CD8-positive, alpha-beta T cell (primary cell): ENCODE measurements at regions of chr6 and their contacts with region 1.

Region 1: GRCh38 chr6:158213925-158214674 is 46.0 kb downstream of the GTF2H5 start:
- DNase-seq: peak; percentile 9 to 77 (median 46)
- ATAC-seq: peak; percentile 99
- H3K4me3 ChIP-seq: no peak overlapping the region
- H3K4me3 Mint-ChIP-seq: no peak overlapping the region
- H3K27ac ChIP-seq: no peak overlapping the region
- H3K27ac Mint-ChIP-seq: no peak overlapping the region
- H3K4me1 ChIP-seq: no peaks in the 10 kb centered on the region
- H3K4me1 Mint-ChIP-seq: no peaks in the 10 kb centered on the region
- H3K27me3 ChIP-seq: no peaks in the 10 kb centered on the region
- H3K27me3 Mint-ChIP-seq: no peaks in the 10 kb centered on the region
- CTCF ChIP-seq: peak; percentile 84

Region 2: DNA sequence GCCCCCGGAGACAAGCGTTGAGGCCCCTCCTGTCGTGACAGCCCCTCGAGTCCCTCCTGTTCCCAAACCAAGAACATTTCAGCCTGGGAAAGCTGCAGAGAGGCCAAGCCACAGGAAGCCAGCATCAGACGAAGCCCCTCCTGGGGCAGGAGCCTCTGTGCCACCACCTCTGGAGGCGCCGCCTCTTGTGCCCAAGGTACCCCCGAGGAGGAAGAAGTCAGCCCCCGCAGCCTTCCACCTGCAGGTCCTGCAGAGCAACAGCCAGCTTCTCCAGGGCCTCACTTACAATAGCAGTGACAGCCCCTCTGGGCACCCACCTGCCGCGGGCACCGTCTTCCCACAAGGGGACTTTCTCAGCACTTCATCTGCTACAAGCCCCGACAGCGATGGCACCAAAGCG is 118.4 kb before region 1 on chr6:
- CTCF ChIA-PET with region 1: no interaction called
- POLR2A ChIA-PET with region 1: no interaction called
- intact Hi-C with region 1: no loop called
- DNase-seq: no peak
- ATAC-seq: no peak
- H3K4me3 ChIP-seq: no peak overlapping the region
- H3K4me3 Mint-ChIP-seq: no peak overlapping the region
- H3K27ac ChIP-seq: no peak overlapping the region
- H3K27ac Mint-ChIP-seq: no peak overlapping the region
- H3K4me1 ChIP-seq: no peaks in the 10 kb centered on the region
- H3K4me1 Mint-ChIP-seq: no peaks in the 10 kb centered on the region
- H3K27me3 ChIP-seq: no peaks in the 10 kb centered on the region
- H3K27me3 Mint-ChIP-seq: no peaks in the 10 kb centered on the region
- CTCF ChIP-seq: no peak

Region 3: DNA sequence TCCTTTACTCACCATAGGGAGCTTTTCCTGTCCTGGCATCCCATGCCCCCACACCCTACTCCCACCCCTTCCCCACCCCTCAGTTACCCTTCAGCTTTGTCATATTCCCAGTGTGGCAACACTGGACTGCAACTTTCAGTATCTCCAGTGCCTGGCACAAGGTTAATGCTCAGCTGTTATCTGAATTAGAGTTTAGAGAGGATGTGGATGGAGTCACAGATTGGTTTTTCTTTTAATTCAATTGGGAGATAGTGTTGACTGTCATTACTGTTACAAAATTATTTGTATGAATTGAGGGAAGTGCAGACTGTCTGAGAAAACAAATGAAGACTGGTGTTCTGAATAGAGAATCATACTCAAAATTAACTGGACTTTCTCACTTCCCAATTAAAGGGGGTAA is 188.1 kb after region 1 on chr6:
- CTCF ChIA-PET with region 1: interaction called, 10 read pairs
- POLR2A ChIA-PET with region 1: interaction called, 3 read pairs
- intact Hi-C with region 1: no loop called
- DNase-seq: no peak
- ATAC-seq: no peak
- H3K4me3 ChIP-seq: no peak overlapping the region
- H3K4me3 Mint-ChIP-seq: no peak overlapping the region
- H3K27ac ChIP-seq: no peak overlapping the region
- H3K27ac Mint-ChIP-seq: no peak overlapping the region
- H3K4me1 ChIP-seq: no peaks in the 10 kb centered on the region
- H3K4me1 Mint-ChIP-seq: peaks cover 16% of the 10 kb centered on the region
- H3K27me3 ChIP-seq: no peaks in the 10 kb centered on the region
- H3K27me3 Mint-ChIP-seq: no peaks in the 10 kb centered on the region
- CTCF ChIP-seq: no peak

Region 4: GRCh38 chr6:158518191-158519127 is 304.4 kb after region 1 on chr6:
- CTCF ChIA-PET with region 1: interaction called, 7 read pairs
- POLR2A ChIA-PET with region 1: no interaction called
- intact Hi-C with region 1: loop called in 1 of 2 experiments (anchors 2 kb)
- DNase-seq: peak in 6 of 9 experiments; percentile 25 to 74 (median 52)
- ATAC-seq: peak; percentile 66
- H3K4me3 ChIP-seq: peak overlapping the region; percentile 10 to 41
- H3K4me3 Mint-ChIP-seq: peak overlapping the region; percentile 72
- H3K27ac ChIP-seq: peak overlapping the region in 1 of 2 experiments; percentile 41
- H3K27ac Mint-ChIP-seq: peak overlapping the region; percentile 8
- H3K4me1 ChIP-seq: peaks cover 20% of the 10 kb centered on the region
- H3K4me1 Mint-ChIP-seq: peaks cover 41% of the 10 kb centered on the region
- H3K27me3 ChIP-seq: peaks cover 0 to 4% of the 10 kb centered on the region in 2 experiments
- H3K27me3 Mint-ChIP-seq: peaks cover 24% of the 10 kb centered on the region
- CTCF ChIP-seq: no peak

Region 5: DNA sequence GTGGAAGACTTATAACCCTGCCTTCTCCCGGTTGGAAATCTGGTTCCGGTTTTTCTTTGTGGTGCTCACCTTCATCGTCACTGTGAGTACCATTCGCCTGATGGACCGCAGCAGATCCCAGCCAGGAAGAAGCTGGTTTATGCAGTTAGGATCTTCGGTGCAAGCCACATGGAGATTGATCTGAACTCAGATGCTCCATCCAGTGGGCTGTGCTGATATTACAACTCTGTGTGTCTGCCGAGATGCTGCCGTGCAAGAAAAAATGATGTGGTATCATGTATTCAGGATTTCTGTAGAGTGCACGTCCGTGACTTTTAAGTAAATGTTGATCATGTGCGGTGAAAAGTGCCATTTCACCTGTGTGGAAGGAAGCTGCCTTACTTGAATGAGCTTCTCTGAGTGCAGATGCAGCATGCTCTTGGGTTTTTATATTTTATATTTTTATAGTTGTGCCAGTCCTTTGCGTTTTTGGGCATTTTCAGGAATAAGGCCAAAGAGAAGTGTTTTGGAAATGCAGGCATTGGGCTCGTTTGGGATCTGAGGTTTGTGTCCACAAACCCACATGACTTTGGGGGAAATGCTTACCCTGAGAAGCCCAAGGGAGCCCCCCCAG is 391.3 kb after region 1 on chr6:
- CTCF ChIA-PET with region 1: interaction called, 21 read pairs
- POLR2A ChIA-PET with region 1: no interaction called
- intact Hi-C with region 1: loop called (anchors 1 to 2 kb)
- DNase-seq: peak; percentile 14 to 71 (median 52)
- ATAC-seq: peak; percentile 87
- H3K4me3 ChIP-seq: no peak overlapping the region
- H3K4me3 Mint-ChIP-seq: no peak overlapping the region
- H3K27ac ChIP-seq: peak overlapping the region in 1 of 2 experiments; percentile 1
- H3K27ac Mint-ChIP-seq: no peak overlapping the region
- H3K4me1 ChIP-seq: no peaks in the 10 kb centered on the region
- H3K4me1 Mint-ChIP-seq: peaks cover 2% of the 10 kb centered on the region
- H3K27me3 ChIP-seq: no peaks in the 10 kb centered on the region
- H3K27me3 Mint-ChIP-seq: no peaks in the 10 kb centered on the region
- CTCF ChIP-seq: peak; percentile 69

Region 6: GRCh38 chr6:158793432-158793831 is 579.3 kb after region 1 on chr6:
- CTCF ChIA-PET with region 1: no interaction called
- POLR2A ChIA-PET with region 1: no interaction called
- intact Hi-C with region 1: no loop called
- DNase-seq: peak in 2 of 9 experiments; percentile 59 to 70
- ATAC-seq: peak; percentile 22
- H3K4me3 ChIP-seq: no peak overlapping the region
- H3K4me3 Mint-ChIP-seq: peak overlapping the region; percentile 32
- H3K27ac ChIP-seq: peak overlapping the region in 1 of 2 experiments; percentile 32
- H3K27ac Mint-ChIP-seq: peak overlapping the region; percentile 45
- H3K4me1 ChIP-seq: peaks cover 73% of the 10 kb centered on the region
- H3K4me1 Mint-ChIP-seq: peaks cover 81% of the 10 kb centered on the region
- H3K27me3 ChIP-seq: no peaks in the 10 kb centered on the region
- H3K27me3 Mint-ChIP-seq: no peaks in the 10 kb centered on the region
- CTCF ChIP-seq: peak; percentile 36